MCF 10A (cell line): ENCODE measurements at regions of chr18 and their contacts with region 1.

Region 1: GRCh38 chr18:67600181-67601172 is 84.0 kb upstream of the DSEL start:
- DNase-seq: no peak
- H3K4me3 Mint-ChIP-seq: no peak overlapping the region
- H3K27ac Mint-ChIP-seq: peak overlapping the region; percentile 12
- H3K4me1 Mint-ChIP-seq: peaks cover 28% of the 10 kb centered on the region
- H3K27me3 Mint-ChIP-seq: no peaks in the 10 kb centered on the region
- CTCF ChIP-seq: no peak

Region 2: DNA sequence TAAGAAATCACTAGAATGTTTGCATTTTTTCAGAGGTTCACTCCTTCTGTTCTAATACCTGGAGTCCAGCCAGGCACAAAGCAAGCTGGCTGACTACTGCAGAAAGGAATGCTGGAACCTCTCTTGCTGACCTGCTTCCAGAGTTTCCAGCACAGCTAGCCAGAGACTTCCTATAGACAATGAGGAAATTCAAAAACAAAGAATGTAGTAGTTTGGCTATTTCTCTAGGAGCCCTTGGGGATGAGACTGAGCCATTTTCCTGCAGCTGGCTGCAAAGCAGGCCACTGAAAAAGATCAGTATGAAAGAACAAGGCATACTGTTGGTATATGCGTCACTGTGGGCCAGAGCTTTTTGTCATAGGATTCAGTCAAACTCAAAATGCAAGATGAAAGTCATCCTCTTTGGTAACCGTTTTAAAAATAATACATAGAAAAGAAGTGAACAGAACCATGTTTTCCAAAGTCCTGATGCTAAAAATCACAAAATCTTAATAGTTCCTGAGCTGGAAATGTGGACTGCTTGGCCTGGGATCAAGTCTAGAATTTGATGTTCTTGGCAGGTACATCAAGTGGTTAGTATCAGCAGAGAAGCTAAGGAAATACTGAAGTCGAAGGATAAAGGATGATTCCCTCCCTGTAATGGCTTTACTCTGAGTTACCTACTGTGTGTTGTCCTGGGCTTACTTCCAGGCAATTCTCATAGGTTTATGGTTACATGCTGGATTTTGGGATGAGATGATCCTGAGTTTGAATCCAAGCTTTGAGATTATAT is 75.0 kb before region 1 on chr18:
- CTCF ChIA-PET with region 1: interaction called, 3 read pairs
- POLR2A ChIA-PET with region 1: interaction called, 64 read pairs
- intact Hi-C with region 1: no loop called
- DNase-seq: peak; percentile 97
- H3K4me3 Mint-ChIP-seq: peak overlapping the region; percentile 45
- H3K27ac Mint-ChIP-seq: peak overlapping the region; percentile 91
- H3K4me1 Mint-ChIP-seq: peaks cover 41% of the 10 kb centered on the region
- H3K27me3 Mint-ChIP-seq: no peaks in the 10 kb centered on the region
- CTCF ChIP-seq: no peak